HEK293 (cell line): ENCODE measurements at regions of chr7 and their contacts with region 1.

Region 1: GRCh38 chr7:154927624-154928143 is 75.2 kb downstream of the PAXIP1 start:
- H3K4me3 ChIP-seq: peak overlapping the region; percentile 41
- H3K27ac ChIP-seq: no peak overlapping the region
- H3K4me1 ChIP-seq: no peaks in the 10 kb centered on the region
- CTCF ChIP-seq: peak; percentile 39; the same call in 1 of the 2 replicates

Region 2: GRCh38 chr7:154546946-154547587 is 380.6 kb before region 1 on chr7:
- CTCF ChIA-PET with region 1: no interaction called
- POLR2A ChIA-PET with region 1: no interaction called
- H3K4me3 ChIP-seq: no peak overlapping the region
- H3K27ac ChIP-seq: no peak overlapping the region
- H3K4me1 ChIP-seq: no peaks in the 10 kb centered on the region
- CTCF ChIP-seq: no peak

Region 3: DNA sequence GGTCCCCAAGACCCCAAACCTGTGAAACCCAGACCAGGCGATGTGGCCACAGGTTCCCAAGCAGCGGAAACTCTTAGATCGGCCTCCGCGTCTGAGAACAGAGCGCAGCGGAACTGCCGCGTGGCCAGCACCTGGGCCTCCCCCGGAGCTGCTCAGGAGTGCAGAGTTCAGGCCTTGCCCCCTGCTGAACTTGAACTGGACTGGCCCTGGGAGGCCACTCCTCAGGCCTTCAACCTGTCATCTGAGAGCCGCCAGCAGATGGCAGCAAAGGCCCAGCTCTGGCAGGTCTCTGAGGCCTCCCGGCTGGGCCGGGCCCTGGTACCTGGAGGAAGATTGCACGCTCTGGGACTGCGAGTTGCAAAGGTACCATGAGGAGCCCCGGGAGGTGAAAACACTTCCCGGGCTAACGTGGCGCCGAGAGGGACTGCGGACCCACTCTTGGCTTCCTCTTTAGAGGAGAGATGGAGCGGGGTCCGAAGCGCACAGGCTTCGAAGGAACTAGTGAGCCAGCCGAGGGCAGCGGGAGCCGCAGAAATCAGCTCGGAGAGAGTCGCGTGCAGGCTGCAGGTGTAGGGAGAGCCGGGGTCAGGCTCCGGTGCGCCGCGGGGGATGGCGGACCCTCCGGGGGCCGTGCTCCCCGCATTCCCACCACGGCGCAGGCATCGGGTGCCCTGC is 13.9 kb before region 1 on chr7:
- CTCF ChIA-PET with region 1: interaction called, 21 read pairs
- POLR2A ChIA-PET with region 1: no interaction called
- H3K4me3 ChIP-seq: no peak overlapping the region
- H3K27ac ChIP-seq: no peak overlapping the region
- H3K4me1 ChIP-seq: no peaks in the 10 kb centered on the region
- CTCF ChIP-seq: peak; percentile 67

Region 4: GRCh38 chr7:155356323-155357105 is 428.8 kb after region 1 on chr7:
- CTCF ChIA-PET with region 1: interaction called, 11 read pairs
- POLR2A ChIA-PET with region 1: no interaction called
- H3K4me3 ChIP-seq: no peak overlapping the region
- H3K27ac ChIP-seq: no peak overlapping the region
- H3K4me1 ChIP-seq: no peaks in the 10 kb centered on the region
- CTCF ChIP-seq: no peak